ENCODE measurements at regions of chr1 and their contacts with region 1.

Region 1: GRCh38 chr1:54791880-54792522 is 9.1 kb downstream of the TTC22 start:
- H3K4me3 Mint-ChIP-seq: no peak overlapping the region
- H3K27ac Mint-ChIP-seq: no peak overlapping the region
- H3K4me1 Mint-ChIP-seq: peaks cover 6% of the 10 kb centered on the region
- H3K27me3 Mint-ChIP-seq: no peaks in the 10 kb centered on the region

Region 2: GRCh38 chr1:54671985-54672608 is 119.9 kb before region 1 on chr1:
- intact Hi-C with region 1: loop called (anchors 5 kb)
- H3K4me3 Mint-ChIP-seq: no peak overlapping the region
- H3K27ac Mint-ChIP-seq: no peak overlapping the region
- H3K4me1 Mint-ChIP-seq: no peaks in the 10 kb centered on the region
- H3K27me3 Mint-ChIP-seq: no peaks in the 10 kb centered on the region

Region 3: GRCh38 chr1:54835970-54836369 is 44.0 kb after region 1 on chr1:
- intact Hi-C with region 1: no loop called
- H3K4me3 Mint-ChIP-seq: no peak overlapping the region
- H3K27ac Mint-ChIP-seq: no peak overlapping the region
- H3K4me1 Mint-ChIP-seq: no peaks in the 10 kb centered on the region
- H3K27me3 Mint-ChIP-seq: no peaks in the 10 kb centered on the region

Measured in dendritic cell treated with granulocyte-macrophage colony-stimulating factor and Interleukin-4, amounts not matched to agents 40 ng/mL and 50 ng/mL, for 4 days (primary cell).